ENCODE measurements at regions of chr6 and their contacts with region 1.

Region 1: DNA sequence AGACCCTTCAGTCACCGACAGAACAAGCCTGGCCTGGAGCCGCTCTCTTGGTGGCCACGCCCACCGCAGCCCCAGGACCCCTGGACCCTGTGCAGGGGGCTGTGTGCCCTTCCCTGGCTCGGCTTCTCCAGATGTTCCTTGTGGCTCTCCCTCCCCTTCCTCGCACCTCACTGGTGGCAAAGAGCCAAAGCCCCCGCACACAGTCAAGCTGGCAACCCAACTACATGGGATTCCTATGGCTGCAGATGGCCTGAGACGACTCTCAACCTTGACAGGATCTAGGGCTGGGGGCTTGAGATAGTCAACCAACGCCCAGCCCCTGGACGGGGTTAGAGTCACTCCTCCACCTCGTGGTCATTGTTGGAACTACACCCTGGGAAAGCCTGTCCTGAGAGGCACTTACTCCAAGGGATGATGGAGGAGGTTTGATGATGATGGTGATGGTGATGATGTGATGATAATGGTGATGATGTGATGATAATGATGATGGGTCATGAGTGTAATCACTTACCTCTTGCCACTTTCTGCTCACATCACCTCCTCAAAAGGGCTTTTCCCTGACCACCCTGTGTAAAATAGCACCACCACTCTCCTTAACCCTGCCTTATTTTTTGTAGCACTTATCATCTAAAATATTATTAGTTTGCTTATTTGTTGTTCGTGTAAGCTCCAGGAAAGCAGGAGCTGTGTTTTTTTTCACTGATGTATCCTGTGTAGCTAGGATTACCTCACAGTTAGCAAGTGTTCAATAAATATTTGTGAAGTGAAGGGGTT is 278.4 kb downstream of the LRFN2 start:
- DNase-seq: peak; percentile 26 to 55
- ATAC-seq: peak in 5 of 8 donors; percentile 47 to 79 (median 69)
- H3K4me3 ChIP-seq: no peak overlapping the region
- H3K27ac ChIP-seq: no peak overlapping the region
- H3K4me1 ChIP-seq: peaks cover 0 to 5% (median 0%) of the 10 kb centered on the region in 9 donors
- H3K27me3 ChIP-seq: peaks cover 0 to 41% (median 18%) of the 10 kb centered on the region in 7 donors
- CTCF ChIP-seq: peak; percentile 72 to 90 (median 80)

Region 2: GRCh38 chr6:39347906-39348585 is 960.7 kb before region 1 on chr6:
- intact Hi-C with region 1: loop called in 3 of 10 experiments (anchors 5 to 10 kb)
- DNase-seq: peak; percentile 63 to 70
- ATAC-seq: peak; percentile 45 to 79 (median 72)
- H3K4me3 ChIP-seq: no peak overlapping the region
- H3K27ac ChIP-seq: no peak overlapping the region
- H3K4me1 ChIP-seq: peaks cover 0 to 8% (median 0%) of the 10 kb centered on the region in 9 donors
- H3K27me3 ChIP-seq: no peaks in the 10 kb centered on the region
- CTCF ChIP-seq: peak; percentile 64 to 93 (median 89)

Region 3: GRCh38 chr6:39361657-39362486 is 946.8 kb before region 1 on chr6:
- intact Hi-C with region 1: loop called in 2 of 10 experiments (anchors 10 kb)
- DNase-seq: peak; percentile 48 to 56
- ATAC-seq: peak; percentile 65 to 87 (median 80)
- H3K4me3 ChIP-seq: no peak overlapping the region
- H3K27ac ChIP-seq: no peak overlapping the region
- H3K4me1 ChIP-seq: peaks cover 0 to 15% (median 6%) of the 10 kb centered on the region in 9 donors
- H3K27me3 ChIP-seq: no peaks in the 10 kb centered on the region
- CTCF ChIP-seq: peak; percentile 68 to 84 (median 78)

Region 4: DNA sequence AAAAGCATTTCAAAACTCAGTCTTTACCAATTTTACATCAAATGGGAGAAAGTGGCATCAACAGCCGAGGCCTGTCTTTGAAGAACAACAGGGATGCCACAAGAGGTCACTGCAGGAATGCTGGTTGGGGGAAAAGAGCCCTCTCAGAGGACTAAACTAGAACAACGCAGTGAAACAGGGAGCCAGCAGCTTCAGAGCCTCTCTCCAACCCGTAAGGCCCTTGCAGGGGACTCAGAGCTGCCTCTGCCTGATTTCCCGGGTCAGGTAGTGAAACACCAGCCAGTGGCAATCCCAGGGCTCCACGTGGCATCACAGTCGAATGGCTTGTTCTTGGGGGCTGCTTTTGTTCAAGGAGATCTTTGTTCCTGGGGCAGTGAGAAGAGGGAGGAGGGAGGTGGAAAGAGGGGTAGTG is 931.2 kb before region 1 on chr6:
- intact Hi-C with region 1: loop called in 6 of 10 experiments (anchors 10 kb)
- DNase-seq: peak; percentile 25 to 71
- ATAC-seq: peak; percentile 78 to 90 (median 88)
- H3K4me3 ChIP-seq: no peak overlapping the region
- H3K27ac ChIP-seq: no peak overlapping the region
- H3K4me1 ChIP-seq: peaks cover 0 to 14% (median 0%) of the 10 kb centered on the region in 9 donors
- H3K27me3 ChIP-seq: no peaks in the 10 kb centered on the region
- CTCF ChIP-seq: peak; percentile 41 to 80 (median 70)

Measured in heart right ventricle (tissue), 16 donors.